ENCODE measurements at regions of chr6 and their contacts with region 1.

Region 1: GRCh38 chr6:166333172-166333995 is 9.0 kb downstream of the SFT2D1 start:
- DNase-seq: peak; percentile 79
- CTCF ChIP-seq: no peak

Region 2: GRCh38 chr6:166377721-166378120 is 44.3 kb after region 1 on chr6:
- CTCF ChIA-PET with region 1: interaction called, 12 read pairs
- POLR2A ChIA-PET with region 1: no interaction called
- DNase-seq: no peak
- CTCF ChIP-seq: no peak

Measured in GM10248 (cell line).